ENCODE measurements at regions of chr6 and their contacts with region 1.

Region 1: GRCh38 chr6:20900389-20901160 is 366.3 kb downstream of the CDKAL1 start:
- DNase-seq: no peak
- H3K4me3 ChIP-seq: no peak overlapping the region
- CTCF ChIP-seq: no peak
- POLR2A ChIP-seq: no peak

Region 2: GRCh38 chr6:20386218-20386617 is 514.4 kb before region 1 on chr6:
- intact Hi-C with region 1: loop called (anchors 5 kb)
- DNase-seq: no peak
- H3K4me3 ChIP-seq: no peak overlapping the region
- CTCF ChIP-seq: no peak
- POLR2A ChIP-seq: no peak

Region 3: DNA sequence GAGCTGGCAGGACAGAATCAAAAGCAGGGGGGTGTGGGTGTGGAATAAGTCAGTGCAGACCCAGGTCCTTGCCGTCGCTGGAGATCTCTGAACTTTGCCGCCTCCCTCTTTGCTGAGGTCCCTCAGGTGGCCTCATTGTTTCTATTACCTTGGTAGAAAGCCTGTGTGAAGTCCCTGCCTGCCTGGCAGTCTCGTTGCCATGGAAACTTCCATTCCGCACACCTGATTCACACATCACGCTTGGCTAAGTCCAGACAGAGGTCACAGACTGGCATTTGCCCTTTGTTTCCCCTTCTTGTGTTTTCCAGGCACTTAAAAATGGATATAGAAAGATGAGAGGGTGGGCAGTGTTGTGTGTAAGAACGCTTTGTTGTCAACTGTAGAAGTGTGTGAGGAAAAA is 1135.7 kb after region 1 on chr6:
- intact Hi-C with region 1: no loop called
- DNase-seq: no peak
- H3K4me3 ChIP-seq: no peak overlapping the region
- CTCF ChIP-seq: no peak
- POLR2A ChIP-seq: no peak

Measured in lower leg skin (tissue), 4 donors.